Cardiac septum (tissue), 1 donor: ENCODE measurements at regions of chrX and their contacts with region 1.

Region 1: DNA sequence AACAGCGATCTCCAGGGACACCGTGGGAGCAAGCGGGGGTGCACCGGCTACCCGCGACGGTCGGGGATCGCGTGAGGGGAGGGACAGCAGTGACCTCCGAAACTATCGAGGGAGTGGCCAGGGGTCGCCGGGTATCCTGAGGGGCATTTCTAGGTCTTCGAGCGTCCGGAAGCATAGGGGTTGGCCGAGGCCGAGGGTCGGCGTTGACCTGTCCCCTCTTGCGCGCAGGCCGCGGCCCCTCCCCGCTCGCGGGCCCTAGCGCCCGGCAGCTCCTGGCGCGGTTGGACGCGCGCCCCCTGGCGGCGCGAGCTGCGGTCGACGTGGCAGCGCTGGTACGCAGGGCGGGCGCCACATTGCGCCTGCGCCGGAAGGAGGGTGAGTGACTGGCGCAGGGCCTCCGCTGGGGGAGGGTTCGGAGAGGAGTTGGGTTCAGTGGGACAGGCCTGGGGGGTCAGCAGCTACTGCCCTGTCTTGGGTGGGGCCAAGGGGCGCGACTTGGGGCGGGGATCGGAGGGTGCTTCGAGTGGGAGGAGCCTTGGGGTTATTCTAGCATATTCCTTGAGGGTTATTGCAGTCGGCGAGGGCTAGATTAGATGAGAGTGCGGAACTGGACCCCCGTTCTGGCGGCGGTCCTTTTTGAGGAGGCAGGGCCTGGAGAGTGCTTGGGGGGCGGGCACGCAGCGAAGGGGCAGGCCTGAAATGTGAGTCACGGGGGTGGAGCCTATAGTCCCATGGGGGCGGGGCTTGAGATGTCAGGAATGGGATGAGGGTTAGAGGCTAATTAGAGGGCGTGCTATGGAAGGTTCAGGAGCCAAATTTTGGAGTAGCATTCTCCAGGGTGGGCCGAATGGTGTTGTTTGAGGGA is 1.2 kb downstream of the MAGIX start:
- DNase-seq: peak; percentile 93

Region 2: GRCh38 chrX:48976086-48976485 is 187.7 kb before region 1 on chrX:
- intact Hi-C with region 1: no loop called
- DNase-seq: no peak

Region 3: GRCh38 chrX:49184294-49185061 is 20.7 kb after region 1 on chrX:
- intact Hi-C with region 1: loop called (anchors 2 kb)
- DNase-seq: peak; percentile 92